ENCODE measurements at regions of chr12 and their contacts with region 1.

Region 1: GRCh38 chr12:27828196-27828595 is 48.2 kb upstream of the MANSC4 start:
- DNase-seq: no peak
- H3K4me3 ChIP-seq: no peak overlapping the region
- H3K27ac ChIP-seq: no peak overlapping the region
- H3K4me1 ChIP-seq: no peaks in the 10 kb centered on the region
- H3K27me3 ChIP-seq: no peaks in the 10 kb centered on the region
- CTCF ChIP-seq: no peak
- POLR2A ChIP-seq: no peak

Region 2: DNA sequence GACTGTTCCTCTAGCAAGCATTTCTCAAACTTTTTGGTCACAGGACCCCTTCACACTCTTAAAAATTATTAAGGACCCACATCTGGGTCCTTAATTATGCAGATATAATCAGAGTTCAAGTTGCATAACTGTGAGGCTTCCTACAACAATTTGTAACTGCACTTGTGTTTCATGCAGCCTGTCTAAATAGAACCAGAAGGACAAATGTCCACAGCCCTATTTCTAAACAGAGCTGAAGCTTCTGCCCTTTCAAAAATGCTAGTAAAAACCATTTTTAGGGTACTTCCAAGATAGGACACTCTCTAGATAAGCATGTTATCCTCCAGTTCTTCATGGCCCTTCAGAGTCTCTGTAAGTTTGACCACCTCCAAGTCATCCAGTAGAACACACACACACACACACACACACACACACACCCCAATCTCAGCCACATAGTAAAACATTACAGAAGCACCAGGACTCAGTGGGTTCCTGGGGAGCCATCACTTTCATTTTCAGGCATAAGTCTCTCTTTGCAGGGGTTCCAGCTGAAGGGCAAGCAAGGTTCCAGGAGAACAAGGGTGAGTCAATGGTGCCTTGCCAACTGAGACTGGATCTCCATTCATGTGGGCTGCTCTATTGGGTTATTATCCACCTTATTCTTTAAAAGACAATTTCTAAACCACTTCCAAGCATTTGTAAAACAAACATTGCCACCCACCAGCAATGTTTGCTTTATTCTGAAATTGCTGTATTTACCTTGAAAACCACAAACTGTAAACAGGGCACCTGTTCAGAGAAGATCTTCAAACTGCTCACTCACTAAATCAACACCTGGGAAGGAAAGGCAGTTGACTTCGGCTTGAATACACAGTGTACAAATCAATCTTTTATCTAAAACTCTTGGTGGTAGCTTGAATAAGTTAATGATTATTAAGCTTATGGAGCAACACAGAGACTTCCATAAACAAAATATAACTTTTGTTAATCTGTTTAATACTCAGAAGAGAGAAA is 1059.3 kb before region 1 on chr12:
- intact Hi-C with region 1: no loop called
- DNase-seq: no peak
- H3K4me3 ChIP-seq: no peak overlapping the region
- H3K27ac ChIP-seq: no peak overlapping the region
- H3K4me1 ChIP-seq: no peaks in the 10 kb centered on the region
- H3K27me3 ChIP-seq: no peaks in the 10 kb centered on the region
- CTCF ChIP-seq: no peak
- POLR2A ChIP-seq: no peak

Region 3: DNA sequence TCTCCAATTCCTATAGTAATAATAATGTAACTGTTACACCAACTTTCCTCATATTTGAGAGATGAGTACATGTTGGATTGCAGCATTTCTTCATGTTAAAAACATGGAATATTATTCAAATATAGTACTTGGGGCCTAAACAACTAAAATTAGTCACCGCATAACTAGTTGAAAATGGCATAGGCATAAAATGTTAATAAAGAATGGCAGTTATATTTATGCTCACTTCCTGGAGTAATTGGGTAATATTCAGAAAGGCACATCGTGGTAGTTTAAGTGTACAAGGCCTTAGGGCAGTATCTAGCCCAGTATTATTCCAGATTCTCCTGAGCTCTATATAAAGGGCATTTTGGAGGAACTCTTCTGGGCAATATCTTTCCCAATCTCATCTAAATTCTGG is 1506.7 kb after region 1 on chr12:
- intact Hi-C with region 1: loop called (anchors 5 kb)
- DNase-seq: no peak
- H3K4me3 ChIP-seq: no peak overlapping the region
- H3K27ac ChIP-seq: no peak overlapping the region
- H3K4me1 ChIP-seq: no peaks in the 10 kb centered on the region
- H3K27me3 ChIP-seq: no peaks in the 10 kb centered on the region
- CTCF ChIP-seq: no peak
- POLR2A ChIP-seq: no peak